Naive thymus-derived CD4-positive, alpha-beta T cell (primary cell): ENCODE measurements at regions of chr2 and their contacts with region 1.

Region 1: DNA sequence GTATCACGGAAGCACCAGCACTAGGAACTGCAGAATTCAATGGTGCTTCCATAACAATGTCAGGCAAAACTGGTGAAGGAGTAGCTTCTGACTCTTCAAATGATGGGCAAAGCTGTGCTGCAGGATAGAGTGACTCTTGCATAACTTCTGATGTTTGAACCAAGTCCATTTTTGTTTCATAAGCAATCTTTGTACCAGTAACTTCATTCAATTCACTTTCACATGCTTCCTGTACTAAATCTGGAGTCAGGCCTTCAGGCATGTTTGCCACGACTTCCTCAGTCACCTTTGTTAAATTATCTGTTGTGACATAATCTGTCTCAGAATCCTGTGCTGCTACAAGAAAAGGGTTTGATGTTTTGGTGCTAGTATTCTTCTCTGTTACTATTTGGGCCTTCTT is 24.0 kb downstream of the RTN4 start:
- DNase-seq: peak in 2 of 9 donors; percentile 30 to 37
- ATAC-seq: no peak
- H3K4me3 ChIP-seq: no peak overlapping the region
- H3K4me3 Mint-ChIP-seq: no peak overlapping the region
- H3K27ac ChIP-seq: no peak overlapping the region
- H3K27ac Mint-ChIP-seq: no peak overlapping the region
- H3K4me1 ChIP-seq: peaks cover 26 to 47% of the 10 kb centered on the region in 2 donors
- H3K4me1 Mint-ChIP-seq: peaks cover 4 to 12% (median 10%) of the 10 kb centered on the region in 7 donors
- H3K27me3 ChIP-seq: no peaks in the 10 kb centered on the region
- H3K27me3 Mint-ChIP-seq: no peaks in the 10 kb centered on the region

Region 2: DNA sequence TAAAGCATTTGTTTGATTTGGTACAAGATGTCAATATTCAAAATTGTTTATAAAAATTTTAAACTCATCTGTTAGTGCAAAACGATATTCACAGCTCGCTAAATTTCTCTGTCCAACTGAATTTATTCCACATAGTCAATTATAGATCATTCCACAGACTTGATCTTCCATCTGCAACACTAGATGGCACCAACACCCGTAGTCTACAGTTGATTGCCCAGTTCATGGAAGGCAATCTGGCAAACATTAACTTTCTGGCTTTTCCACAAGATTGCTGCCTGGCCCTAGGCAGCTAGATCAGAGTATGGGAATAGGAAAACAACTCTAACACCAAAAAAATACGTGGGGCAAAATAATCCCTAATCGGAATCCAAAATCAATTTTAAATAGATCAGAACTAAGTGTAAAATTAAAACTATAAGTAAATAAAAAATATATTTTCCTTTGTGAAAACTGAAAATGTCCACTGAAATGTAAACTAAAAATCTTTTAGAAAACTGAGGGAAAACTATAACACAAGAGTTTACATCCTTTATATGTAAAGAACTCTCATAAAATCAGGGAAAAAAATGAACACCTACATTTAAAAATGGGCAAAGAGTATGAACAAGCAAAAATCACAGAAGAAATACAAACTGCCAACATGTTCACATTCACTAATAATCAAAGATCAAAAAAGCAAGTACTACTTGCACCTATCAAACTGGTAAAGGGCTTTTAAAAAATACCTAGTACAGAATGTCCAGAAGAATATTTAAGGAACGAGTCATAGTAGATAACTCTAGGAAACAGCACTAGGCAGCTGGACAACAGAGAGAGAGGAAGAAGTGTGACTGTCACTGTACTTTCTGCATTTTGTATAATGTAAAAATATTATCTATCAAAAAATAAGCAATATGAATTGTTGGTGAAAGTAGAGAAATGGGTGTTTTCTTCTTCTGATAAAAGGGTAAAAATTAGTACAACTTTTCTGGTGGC is 11.0 kb before region 1 on chr2:
- CTCF ChIA-PET with region 1: interaction called, 6 read pairs
- POLR2A ChIA-PET with region 1: interaction called, 4 read pairs
- intact Hi-C with region 1: loop called in 1 of 2 experiments (anchors 1 kb)
- DNase-seq: peak in 7 of 9 donors; percentile 13 to 56 (median 41)
- ATAC-seq: peak; percentile 60
- H3K4me3 ChIP-seq: no peak overlapping the region
- H3K4me3 Mint-ChIP-seq: no peak overlapping the region
- H3K27ac ChIP-seq: no peak overlapping the region
- H3K27ac Mint-ChIP-seq: peak overlapping the region in 3 of 9 donors; percentile 0 to 47 (median 14)
- H3K4me1 ChIP-seq: peaks cover 9 to 10% of the 10 kb centered on the region in 2 donors
- H3K4me1 Mint-ChIP-seq: peaks cover 19 to 66% (median 41%) of the 10 kb centered on the region in 7 donors
- H3K27me3 ChIP-seq: no peaks in the 10 kb centered on the region
- H3K27me3 Mint-ChIP-seq: no peaks in the 10 kb centered on the region

Region 3: DNA sequence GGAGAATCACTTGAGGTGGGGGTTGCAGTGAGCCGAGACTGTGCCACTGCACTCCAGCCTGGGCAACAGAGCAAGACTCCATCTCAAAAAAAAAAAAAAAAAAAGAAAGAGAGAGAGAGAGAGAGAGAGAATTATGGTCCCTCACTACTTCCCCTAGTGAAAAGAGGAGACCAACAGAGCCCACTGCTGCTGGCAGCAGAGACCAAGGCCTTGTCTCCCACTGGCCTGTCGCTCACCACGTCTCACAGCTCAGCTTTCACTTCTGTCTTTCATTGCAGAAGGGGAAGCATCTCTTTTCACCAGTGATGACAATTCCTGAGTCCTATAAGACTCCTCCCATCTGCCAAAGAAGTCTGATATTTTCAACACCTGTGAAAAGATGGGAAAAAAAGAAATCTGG is 124.6 kb after region 1 on chr2:
- CTCF ChIA-PET with region 1: no interaction called
- POLR2A ChIA-PET with region 1: no interaction called
- intact Hi-C with region 1: no loop called
- DNase-seq: no peak
- ATAC-seq: peak; percentile 83
- H3K4me3 ChIP-seq: no peak overlapping the region
- H3K4me3 Mint-ChIP-seq: no peak overlapping the region
- H3K27ac ChIP-seq: no peak overlapping the region
- H3K27ac Mint-ChIP-seq: no peak overlapping the region
- H3K4me1 ChIP-seq: no peaks in the 10 kb centered on the region
- H3K4me1 Mint-ChIP-seq: peaks cover 0 to 7% (median 0%) of the 10 kb centered on the region in 7 donors
- H3K27me3 ChIP-seq: no peaks in the 10 kb centered on the region
- H3K27me3 Mint-ChIP-seq: no peaks in the 10 kb centered on the region